KBM-7 (cell line): ENCODE measurements at regions of chr11 and their contacts with region 1.

Region 1: DNA sequence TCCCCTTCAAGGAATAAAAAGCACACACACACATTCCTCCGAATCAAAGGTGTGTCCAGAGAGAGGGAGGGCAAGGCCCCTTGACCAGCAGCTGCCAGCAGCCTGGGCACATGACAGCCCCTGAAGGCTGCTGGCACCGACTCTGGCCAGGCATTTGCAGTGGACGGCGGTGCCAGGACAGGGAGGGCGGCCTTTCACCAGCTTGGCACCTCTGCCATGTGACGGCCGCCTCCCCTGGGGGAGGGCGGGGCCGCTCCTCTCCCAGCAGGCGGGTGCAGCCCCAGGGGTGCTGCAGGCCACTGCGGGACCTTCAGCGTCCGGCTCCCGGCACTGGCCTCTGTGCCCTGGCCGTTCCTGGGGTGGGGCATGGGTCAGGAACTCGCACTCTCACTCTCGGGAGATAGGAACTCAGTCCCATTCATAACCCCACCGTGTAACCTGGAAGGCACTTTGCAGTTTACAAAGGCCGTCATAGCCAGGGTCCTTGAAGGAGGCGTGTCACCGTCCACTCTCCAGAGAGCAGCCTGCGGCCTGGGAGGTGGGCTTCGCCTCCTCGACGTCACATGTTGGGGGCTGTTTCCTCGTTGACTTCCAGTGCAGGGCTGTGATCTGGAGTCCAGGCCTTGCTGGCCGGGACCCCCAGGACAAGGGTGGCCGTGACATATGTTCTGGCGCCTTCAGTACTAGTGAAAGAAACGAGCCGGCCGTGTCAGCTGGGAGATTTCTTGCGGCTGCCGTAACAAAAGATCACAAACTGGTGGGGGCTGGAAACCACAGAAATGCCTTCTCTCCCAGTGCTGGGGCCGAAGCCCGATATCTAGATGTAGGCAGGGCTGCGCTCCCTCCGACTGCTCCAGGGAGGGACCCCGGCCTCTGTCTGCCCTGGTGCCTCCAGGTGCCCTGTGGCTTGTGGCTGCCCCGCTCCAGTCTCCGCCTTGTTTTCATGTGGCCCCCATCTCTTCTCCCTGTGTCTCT is 39.9 kb upstream of the SMIM38 start:
- DNase-seq: no peak

Region 2: DNA sequence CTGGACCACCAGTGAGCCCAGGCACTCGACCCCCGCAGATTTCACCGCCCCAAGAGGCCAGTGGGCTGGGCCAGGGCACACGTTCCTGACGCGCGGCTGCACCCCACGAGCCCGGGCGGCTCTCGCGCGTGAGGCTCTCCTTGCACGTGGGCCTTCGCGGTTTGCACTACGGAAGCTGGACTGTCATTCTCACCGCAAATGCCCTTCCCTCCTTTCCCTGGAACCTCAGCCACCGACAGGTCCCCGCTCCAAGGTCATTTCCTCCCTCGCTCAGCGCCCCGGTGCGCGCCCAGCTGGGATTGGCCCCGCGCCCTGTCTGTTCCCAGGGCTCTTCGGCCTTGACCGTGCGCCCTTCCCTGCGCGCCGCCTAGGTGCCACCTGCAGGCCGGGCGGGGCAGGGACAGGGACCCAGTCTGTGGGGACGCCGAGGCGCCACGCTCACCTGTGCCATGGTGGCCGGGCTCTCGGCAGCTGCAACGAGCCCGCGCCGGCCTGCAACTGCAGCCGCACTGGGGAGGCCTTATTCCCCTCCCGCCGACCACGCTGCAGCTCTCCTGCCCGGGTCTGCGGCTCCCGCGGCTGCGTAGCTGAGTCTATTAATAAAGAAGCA is 272.1 kb before region 1 on chr11:
- in situ Hi-C with region 1: no loop called
- DNase-seq: peak; percentile 87

Region 3: DNA sequence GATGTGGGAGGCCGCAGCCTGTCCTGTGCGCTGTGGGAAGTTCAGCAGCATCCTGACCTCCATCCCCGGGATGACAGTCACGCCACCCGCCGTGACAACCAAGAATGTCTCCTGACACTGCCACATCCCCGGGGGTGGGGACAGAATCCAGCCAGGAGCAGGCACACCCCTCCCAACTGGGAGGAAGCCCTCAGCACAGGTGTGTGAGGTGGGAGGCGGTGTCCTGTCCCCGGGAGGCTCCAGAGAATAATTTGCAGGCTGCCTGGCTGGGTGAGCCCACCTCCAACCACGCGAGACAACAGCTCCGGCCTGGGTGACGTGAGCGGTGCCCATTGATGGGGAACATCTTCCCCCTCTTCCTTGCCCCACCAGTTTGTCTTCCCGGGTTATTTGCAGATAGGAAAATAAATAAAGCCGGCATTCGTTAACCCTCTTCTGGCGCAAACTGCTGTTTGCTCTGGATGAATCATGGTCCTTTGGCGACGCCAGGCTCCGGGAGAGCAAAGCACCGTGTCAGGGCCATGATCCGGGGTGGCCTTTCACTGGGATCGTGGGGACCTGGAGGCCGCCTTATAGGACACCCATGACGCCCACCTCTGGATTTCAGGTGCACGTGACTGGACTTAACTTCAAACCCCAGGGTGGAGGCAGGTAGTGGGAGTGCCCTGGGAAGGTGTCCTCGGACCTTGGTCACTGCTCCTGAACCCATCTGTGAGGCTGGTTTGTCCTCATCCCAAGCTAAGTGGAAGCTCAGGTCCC is 538.9 kb after region 1 on chr11:
- in situ Hi-C with region 1: loop called (anchors 10 kb)
- DNase-seq: no peak